ENCODE measurements at regions of chr11 and their contacts with region 1.

Region 1: DNA sequence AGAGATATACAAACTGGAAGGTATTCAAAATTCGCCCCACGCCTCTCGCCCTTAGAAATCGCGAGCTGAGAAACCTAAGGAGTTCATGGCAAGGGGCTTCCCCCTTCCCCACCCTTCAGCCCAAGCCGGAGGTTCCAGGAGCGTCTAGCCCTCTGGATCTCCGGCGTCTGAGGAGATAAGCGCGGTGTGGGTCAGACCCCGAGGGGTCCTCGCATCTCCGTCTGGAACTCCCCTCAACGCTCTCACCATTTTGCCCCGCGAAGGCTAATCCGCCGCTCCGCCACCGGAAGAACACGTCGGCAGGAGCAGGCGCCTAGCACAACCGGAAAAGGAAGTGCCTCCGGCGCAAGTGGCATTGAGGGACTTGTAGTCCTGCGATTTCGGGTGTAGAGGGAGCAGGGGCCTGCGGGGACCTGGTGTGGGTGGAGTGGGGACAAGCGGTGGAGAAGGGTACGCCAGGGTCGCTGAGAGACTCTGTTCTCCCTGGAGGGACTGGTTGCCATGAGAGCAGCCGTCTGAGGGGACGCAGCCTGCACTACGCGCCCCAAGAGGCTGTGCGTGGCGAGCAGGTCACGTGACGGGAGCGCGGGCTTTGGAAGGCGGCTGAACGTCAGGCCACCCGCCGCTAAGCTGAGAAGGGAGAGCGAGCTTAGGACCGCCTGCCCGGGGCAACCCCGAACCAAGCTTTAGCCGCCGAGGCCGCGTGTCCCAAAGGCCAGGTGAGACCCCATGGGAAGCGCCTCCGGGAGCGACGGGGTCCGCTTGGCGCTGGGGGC is at the starts of genes FEN1 and TMEM258:
- DNase-seq: peak; percentile 94
- H3K4me3 ChIP-seq: peak within 1 kb of the TSS; percentile 62 to 89 (median 73)
- H3K27ac ChIP-seq: peak within 1 kb of the TSS; percentile 92 to 94 (median 93)
- H3K4me1 ChIP-seq: peaks cover 0 to 28% (median 21%) of the 10 kb centered on the region in 4 donors
- H3K27me3 ChIP-seq: no peaks in the 10 kb centered on the region
- CTCF ChIP-seq: peak in 2 of 4 experiments; percentile 4 to 36
- EP300 ChIP-seq: no peak
- POLR2A ChIP-seq: peak; percentile 56 to 68
- total RNA-seq, gene FEN1: 5.3 to 8.0 (median 7.0) TPM
- total RNA-seq, gene TMEM258: 39.9 to 64.7 (median 57.4) TPM

Region 2: GRCh38 chr11:61816736-61817455 is 24.4 kb after region 1 on chr11 and contains the start of gene FADS1:
- intact Hi-C with region 1: loop called (anchors 2 kb)
- DNase-seq: peak; percentile 96
- H3K4me3 ChIP-seq: peak within 1 kb of the TSS; percentile 53 to 77 (median 65)
- H3K27ac ChIP-seq: peak within 1 kb of the TSS; percentile 90 to 95 (median 94)
- H3K4me1 ChIP-seq: peaks cover 0 to 22% (median 16%) of the 10 kb centered on the region in 4 donors
- H3K27me3 ChIP-seq: no peaks in the 10 kb centered on the region
- CTCF ChIP-seq: peak in 2 of 4 experiments; percentile 32 to 48
- EP300 ChIP-seq: peak in 2 of 4 donors; percentile 25 to 29
- POLR2A ChIP-seq: peak in 1 of 2 donors; percentile 6
- total RNA-seq, gene FADS1: 11.8 to 17.7 (median 16.6) TPM

Region 3: DNA sequence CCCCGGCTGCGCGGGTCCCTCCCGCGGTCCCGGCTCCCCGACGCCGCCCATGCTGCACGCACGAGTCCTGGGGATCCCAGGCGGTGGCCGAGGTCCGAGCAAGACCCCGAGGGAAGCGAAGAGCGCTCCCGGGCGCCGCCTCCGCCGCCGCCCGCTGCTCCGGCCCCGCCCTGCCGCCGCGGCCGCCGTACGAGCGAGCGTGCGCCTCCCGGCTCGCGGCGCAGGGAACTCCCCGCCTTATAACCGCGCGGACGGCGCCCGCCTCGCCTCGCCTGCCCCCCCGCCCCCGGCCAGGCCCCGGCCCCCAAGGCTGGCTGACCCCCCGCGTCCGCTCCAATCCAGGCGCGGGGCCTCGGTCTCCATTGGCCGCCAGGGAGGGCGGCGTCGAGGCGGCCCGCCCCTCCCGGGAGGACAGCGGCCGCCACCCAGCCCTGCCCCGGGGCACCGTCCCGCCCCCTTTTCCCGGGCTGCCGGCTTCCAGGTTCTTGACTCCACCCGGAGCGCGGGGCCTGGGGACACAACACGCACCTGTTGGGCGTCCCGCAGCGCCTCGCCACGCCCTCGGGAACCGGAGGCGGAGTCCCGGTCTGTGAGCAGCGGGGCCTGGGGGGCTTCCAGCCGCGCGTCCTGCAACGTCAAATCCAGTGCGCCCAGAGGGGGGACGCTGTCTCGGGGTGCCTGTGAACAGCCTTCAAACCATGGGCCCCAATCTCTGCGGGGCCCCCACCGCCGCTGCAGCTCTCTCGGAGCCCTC is 99.0 kb after region 1 on chr11 and contains the start of gene FADS3:
- intact Hi-C with region 1: loop called (anchors 2 kb)
- DNase-seq: peak; percentile 94
- H3K4me3 ChIP-seq: peak within 1 kb of the TSS; percentile 75 to 94 (median 84)
- H3K27ac ChIP-seq: peak within 1 kb of the TSS; percentile 85 to 96 (median 90)
- H3K4me1 ChIP-seq: peaks cover 0 to 46% (median 33%) of the 10 kb centered on the region in 4 donors
- H3K27me3 ChIP-seq: no peaks in the 10 kb centered on the region
- CTCF ChIP-seq: no peak
- EP300 ChIP-seq: no peak
- POLR2A ChIP-seq: no peak
- total RNA-seq, gene FADS3: 21.1 to 57.9 (median 37.5) TPM

Region 4: DNA sequence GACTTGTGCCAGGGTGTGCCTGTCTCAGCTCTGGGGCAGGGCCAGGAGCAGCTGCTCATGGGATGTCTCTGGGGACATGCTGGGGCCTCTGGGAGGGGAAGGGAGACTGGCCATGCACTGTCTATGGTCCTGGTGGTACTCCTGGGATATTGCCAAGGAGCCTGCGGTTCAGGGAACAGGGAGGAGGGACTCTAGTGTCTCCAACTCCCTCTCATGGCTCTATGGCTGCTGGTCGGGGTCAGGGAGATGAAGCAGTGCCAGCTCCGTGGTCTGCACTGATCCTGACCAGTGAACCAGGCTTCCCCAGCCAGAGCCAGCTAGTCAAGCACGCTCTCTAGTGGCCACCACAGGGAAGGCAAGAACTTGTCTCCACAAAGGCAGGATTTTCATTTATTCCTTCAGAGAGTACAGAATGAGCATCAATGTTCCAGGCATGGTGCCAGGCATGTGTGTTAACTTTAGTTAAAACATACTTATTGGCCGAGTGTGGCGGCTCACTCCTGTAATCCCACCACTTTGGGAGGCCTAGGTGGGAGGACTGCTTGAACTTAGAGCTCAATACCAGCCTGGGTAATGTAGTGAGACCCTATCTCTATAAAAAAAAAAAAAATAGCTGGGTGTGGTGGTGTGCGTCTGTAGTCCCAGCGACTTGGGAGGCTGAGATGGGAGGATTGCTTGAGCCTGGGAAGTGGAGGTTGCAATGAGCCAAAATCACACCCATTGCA is 155.2 kb after region 1 on chr11:
- intact Hi-C with region 1: loop called (anchors 2 kb)
- DNase-seq: peak; percentile 95
- H3K4me3 ChIP-seq: no peak overlapping the region
- H3K27ac ChIP-seq: no peak overlapping the region
- H3K4me1 ChIP-seq: peaks cover 0 to 31% (median 22%) of the 10 kb centered on the region in 4 donors
- H3K27me3 ChIP-seq: no peaks in the 10 kb centered on the region
- CTCF ChIP-seq: peak; percentile 78 to 92 (median 86)
- EP300 ChIP-seq: no peak
- POLR2A ChIP-seq: no peak

Region 5: DNA sequence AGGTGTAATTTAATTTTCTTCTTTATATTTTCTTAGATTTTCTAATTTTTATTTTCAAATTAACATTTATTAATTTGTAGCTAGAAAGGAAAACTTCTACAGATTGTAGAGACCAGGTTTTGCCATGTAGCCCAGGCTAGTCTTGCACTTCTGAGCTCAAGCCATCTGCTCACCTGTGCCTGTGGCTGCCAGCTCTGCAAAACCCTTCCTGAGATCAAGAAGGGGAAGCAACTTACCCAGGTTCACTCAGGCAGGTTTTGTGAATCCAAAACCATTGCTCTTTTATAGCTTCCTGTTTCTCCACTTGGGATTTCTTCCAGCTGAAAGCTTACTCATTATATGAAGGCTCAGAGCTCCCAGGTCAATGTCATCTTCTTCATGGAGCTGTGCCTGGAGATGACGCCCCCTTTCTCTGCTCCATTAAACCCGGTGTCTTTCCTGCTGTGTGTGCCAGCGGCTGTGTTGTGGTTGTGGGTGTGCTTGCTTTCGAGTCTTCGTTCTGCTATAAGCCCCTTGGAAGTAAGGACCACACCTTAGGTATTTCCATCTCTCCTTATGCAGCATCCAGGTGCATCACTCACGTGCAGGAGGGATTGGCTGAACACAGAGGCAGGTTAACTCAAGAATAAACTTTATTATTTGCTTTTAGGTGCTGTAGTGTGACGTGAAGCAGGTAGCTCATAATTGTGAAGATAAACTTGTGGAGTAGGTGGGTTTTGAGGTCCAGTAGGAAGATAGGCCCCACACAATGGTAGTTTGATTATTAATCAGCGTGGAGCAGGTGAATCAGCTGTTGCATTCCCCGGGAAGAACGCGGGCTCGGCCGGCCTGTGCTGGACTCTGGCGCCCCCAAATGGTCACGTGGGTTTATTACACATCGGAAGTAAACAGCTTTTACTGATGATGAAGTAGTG is 289.1 kb after region 1 on chr11:
- intact Hi-C with region 1: loop called (anchors 5 kb)
- DNase-seq: peak; percentile 89
- H3K4me3 ChIP-seq: no peak overlapping the region
- H3K27ac ChIP-seq: peak overlapping the region in 1 of 4 donors; percentile 11
- H3K4me1 ChIP-seq: peaks cover 0 to 6% (median 3%) of the 10 kb centered on the region in 4 donors
- H3K27me3 ChIP-seq: no peaks in the 10 kb centered on the region
- CTCF ChIP-seq: peak; percentile 85 to 92 (median 87)
- EP300 ChIP-seq: no peak
- POLR2A ChIP-seq: no peak

Region 6: DNA sequence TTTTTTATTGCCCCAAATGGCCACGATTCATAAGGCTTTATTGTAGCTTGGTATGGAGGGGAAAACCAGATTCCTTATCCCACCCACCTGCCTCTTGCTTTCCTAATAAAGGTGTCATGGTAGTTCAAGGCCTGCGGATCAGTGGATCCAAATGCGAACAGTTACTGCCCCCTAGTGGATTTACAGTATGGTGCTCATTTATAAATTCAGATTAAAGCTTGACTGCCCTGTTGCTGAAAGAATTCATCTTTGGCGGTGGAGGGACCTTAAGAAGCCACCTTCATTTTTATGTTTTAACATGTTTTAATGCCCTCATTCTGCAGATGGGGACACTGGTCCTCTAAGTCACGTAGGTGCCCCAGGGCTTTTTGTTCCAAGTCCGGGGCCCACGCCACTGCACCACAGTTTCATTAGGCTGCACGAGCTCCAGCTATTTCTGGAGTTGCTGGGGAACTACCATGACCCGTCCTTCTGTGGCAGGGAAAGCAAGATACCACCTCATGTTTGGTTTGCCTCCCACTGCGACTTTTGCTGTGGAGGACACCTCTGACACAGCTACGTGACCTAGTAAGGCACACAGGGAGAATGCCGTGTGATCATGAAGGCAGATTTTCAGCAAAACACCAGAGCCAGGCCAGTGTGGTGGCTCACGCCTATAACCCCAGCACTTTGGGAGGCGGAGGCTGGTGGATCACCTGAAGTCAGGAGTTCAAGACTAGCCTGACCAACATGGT is 315.7 kb after region 1 on chr11:
- intact Hi-C with region 1: loop called (anchors 2 kb)
- DNase-seq: no peak
- H3K4me3 ChIP-seq: no peak overlapping the region
- H3K27ac ChIP-seq: no peak overlapping the region
- H3K4me1 ChIP-seq: peaks cover 0 to 39% (median 29%) of the 10 kb centered on the region in 4 donors
- H3K27me3 ChIP-seq: no peaks in the 10 kb centered on the region
- CTCF ChIP-seq: peak; percentile 59 to 86 (median 79)
- EP300 ChIP-seq: no peak
- POLR2A ChIP-seq: no peak

Region 7: GRCh38 chr11:62309991-62310390 is 517.5 kb after region 1 on chr11:
- intact Hi-C with region 1: loop called (anchors 5 kb)
- DNase-seq: no peak
- H3K4me3 ChIP-seq: no peak overlapping the region
- H3K27ac ChIP-seq: no peak overlapping the region
- H3K4me1 ChIP-seq: peaks cover 0 to 5% (median 0%) of the 10 kb centered on the region in 4 donors
- H3K27me3 ChIP-seq: peaks cover 0 to 34% (median 0%) of the 10 kb centered on the region in 3 donors
- CTCF ChIP-seq: no peak
- EP300 ChIP-seq: no peak
- POLR2A ChIP-seq: no peak

Region 8: GRCh38 chr11:62556108-62556871 is 763.8 kb after region 1 on chr11:
- intact Hi-C with region 1: no loop called
- DNase-seq: peak; percentile 97
- H3K4me3 ChIP-seq: peak overlapping the region in 2 of 4 donors; percentile 0 to 13
- H3K27ac ChIP-seq: peak overlapping the region; percentile 92 to 100 (median 96)
- H3K4me1 ChIP-seq: peaks cover 0 to 88% (median 82%) of the 10 kb centered on the region in 4 donors
- H3K27me3 ChIP-seq: no peaks in the 10 kb centered on the region
- CTCF ChIP-seq: no peak
- EP300 ChIP-seq: no peak
- POLR2A ChIP-seq: no peak